Ascending aorta (tissue), 2 donors: ENCODE measurements at regions of chrX and their contacts with region 1.

Region 1: GRCh38 chrX:989959-990510 is 222.4 kb downstream of the CRLF2 start:
- DNase-seq: peak; percentile 79 to 94
- H3K4me3 ChIP-seq: peak overlapping the region; percentile 21 to 52
- H3K27ac ChIP-seq: peak overlapping the region; percentile 31 to 53
- H3K4me1 ChIP-seq: peaks cover 0 to 3% of the 10 kb centered on the region in 2 donors
- H3K27me3 ChIP-seq: no peaks in the 10 kb centered on the region
- CTCF ChIP-seq: no peak

Region 2: DNA sequence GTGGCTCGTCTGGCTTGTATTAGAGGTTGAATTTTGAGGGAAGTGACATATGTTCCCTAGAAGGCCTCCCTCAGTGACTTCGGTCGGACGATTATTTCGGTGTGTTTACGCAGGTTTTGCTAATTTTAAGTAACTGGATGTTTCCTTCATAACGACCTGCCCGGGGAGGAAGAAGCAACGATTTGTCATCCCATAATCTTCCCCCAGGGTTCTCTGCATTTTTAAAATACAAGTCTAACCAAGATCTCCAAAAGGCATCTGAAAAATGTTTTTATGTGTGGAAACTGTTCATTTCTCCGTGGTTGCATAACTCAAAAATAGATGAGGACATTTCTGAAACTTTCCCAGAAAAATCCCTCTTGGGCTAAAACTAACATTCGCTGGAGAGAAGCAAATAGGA is 164.0 kb before region 1 on chrX:
- intact Hi-C with region 1: loop called (anchors 10 kb)
- DNase-seq: no peak
- H3K4me3 ChIP-seq: peak overlapping the region; percentile 21 to 47
- H3K27ac ChIP-seq: peak overlapping the region; percentile 76 to 77
- H3K4me1 ChIP-seq: no peaks in the 10 kb centered on the region
- H3K27me3 ChIP-seq: no peaks in the 10 kb centered on the region
- CTCF ChIP-seq: no peak

Region 3: DNA sequence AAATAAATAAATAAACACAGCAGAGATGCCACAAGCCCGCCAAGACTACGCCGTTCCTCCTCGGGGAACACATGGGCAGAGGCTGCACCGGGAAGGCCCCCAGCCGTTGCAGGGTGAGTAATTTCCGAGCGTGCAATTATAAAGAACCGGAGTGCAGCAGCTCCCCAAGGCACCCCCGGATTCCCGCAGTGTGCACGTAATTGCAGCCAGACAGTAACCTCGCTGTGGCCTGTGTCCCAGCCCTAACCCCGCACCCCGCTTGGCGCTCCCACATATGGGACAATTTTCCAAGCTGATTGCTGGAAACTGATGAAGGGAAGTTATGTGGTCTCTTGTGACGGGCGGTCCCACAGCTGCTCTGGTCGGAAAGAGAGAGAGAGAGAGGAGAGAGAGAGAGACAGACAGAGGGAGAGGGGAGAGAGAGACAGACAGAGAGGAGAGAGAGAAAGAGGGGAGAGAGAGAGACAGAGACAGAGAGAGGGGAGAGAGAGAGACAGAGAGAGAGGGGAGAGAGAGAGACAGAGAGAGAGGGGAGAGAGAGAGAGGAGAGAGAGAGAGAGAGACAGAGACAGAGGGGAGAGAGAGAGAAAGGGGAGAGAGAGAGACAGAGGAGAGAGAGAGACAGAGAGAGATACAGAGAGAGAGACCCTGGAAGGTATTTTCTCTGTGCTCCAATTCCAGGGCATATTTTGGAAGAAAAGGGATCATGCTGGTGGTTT is 84.0 kb before region 1 on chrX:
- intact Hi-C with region 1: no loop called
- DNase-seq: no peak
- H3K4me3 ChIP-seq: no peak overlapping the region
- H3K27ac ChIP-seq: no peak overlapping the region
- H3K4me1 ChIP-seq: no peaks in the 10 kb centered on the region
- H3K27me3 ChIP-seq: no peaks in the 10 kb centered on the region
- CTCF ChIP-seq: no peak

Region 4: DNA sequence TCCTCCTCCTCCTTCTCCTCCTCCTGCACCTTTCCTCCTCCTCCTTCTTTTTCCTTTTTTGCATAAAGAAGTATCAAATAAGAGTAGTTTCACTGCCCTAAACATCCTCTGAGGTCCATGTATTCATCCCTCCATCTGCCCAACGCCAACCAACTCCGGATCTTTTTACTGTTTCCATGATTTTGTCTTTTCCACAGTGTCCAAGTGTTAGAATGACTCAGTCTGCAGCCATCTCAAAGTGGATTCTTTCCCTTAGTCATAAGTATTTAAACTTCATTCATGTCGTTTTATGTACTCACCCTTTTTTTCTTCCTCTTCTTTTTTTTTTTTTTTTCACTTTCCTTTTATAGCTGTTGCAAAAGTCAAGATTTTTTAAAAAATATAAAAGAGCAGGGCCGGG is 291.5 kb after region 1 on chrX:
- intact Hi-C with region 1: no loop called
- DNase-seq: no peak
- H3K4me3 ChIP-seq: no peak overlapping the region
- H3K27ac ChIP-seq: no peak overlapping the region
- H3K4me1 ChIP-seq: no peaks in the 10 kb centered on the region
- H3K27me3 ChIP-seq: no peaks in the 10 kb centered on the region
- CTCF ChIP-seq: no peak

Region 5: GRCh38 chrX:2325076-2325784 is 1335.2 kb after region 1 on chrX:
- intact Hi-C with region 1: loop called (anchors 5 kb)
- DNase-seq: peak; percentile 46 to 90
- H3K4me3 ChIP-seq: peak overlapping the region; percentile 61 to 67
- H3K27ac ChIP-seq: peak overlapping the region; percentile 71 to 78
- H3K4me1 ChIP-seq: no peaks in the 10 kb centered on the region
- H3K27me3 ChIP-seq: no peaks in the 10 kb centered on the region
- CTCF ChIP-seq: no peak